Sigmoid colon (tissue), 7 donors: ENCODE measurements at regions of chr1 and their contacts with region 1.

Region 1: GRCh38 chr1:236523701-236524141 is at the start of gene LGALS8:
- DNase-seq: peak; percentile 95
- H3K4me3 ChIP-seq: peak within 1 kb of the TSS; percentile 64 to 98 (median 84)
- H3K27ac ChIP-seq: peak within 1 kb of the TSS; percentile 81 to 94 (median 89)
- H3K4me1 ChIP-seq: peaks cover 0 to 19% (median 13%) of the 10 kb centered on the region in 4 donors
- H3K27me3 ChIP-seq: no peaks in the 10 kb centered on the region
- CTCF ChIP-seq: no peak
- EP300 ChIP-seq: peak in 1 of 4 donors; percentile 36
- POLR2A ChIP-seq: peak in 1 of 2 donors; percentile 4
- total RNA-seq, gene LGALS8: 40.3 to 86.4 (median 68.1) TPM

Region 2: DNA sequence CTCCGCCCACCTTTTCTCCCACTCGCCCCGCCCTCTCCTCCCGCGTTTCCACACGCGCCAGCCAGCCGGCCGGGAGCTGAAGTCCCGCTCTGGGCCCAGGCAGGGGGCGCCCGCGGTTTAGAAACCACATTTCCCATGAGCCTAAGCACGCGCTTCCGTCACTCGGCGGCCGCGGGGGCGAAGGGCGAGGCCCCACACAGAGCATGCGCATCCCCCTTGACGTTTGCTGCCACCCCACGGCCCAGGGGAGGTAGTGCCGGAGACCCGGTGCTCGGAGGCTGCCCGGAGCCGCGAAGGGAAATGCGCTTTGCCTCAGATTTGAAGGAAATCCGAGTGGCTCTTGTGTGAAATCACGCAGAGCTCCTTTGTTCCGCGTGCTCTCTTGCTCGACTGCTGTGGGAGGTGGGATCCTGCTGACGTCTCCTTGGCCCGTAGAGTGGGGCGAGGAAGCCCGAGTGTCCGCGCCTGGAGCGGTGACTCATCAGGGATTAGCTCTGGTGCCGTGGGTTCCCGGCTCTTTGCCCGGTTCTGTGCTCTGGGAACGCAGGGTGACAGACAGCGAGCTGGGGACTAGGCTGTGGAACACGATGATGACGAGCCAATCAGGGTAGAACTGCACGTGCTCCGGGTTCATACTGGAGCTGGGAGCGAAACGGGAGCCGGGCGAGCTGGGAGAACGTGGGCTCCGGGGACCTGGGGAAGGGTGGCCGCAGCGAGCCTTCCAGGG is 1019.1 kb before region 1 on chr1:
- intact Hi-C with region 1: loop called (anchors 5 kb)
- DNase-seq: peak; percentile 100
- H3K4me3 ChIP-seq: peak overlapping the region; percentile 73 to 92 (median 84)
- H3K27ac ChIP-seq: peak overlapping the region; percentile 98 to 100 (median 100)
- H3K4me1 ChIP-seq: peaks cover 0 to 29% (median 16%) of the 10 kb centered on the region in 4 donors
- H3K27me3 ChIP-seq: no peaks in the 10 kb centered on the region
- CTCF ChIP-seq: peak; percentile 78 to 94 (median 86)
- EP300 ChIP-seq: peak in 2 of 4 donors; percentile 44 to 95
- POLR2A ChIP-seq: peak; percentile 32 to 64

Region 3: GRCh38 chr1:236103646-236104218 is 420.0 kb before region 1 on chr1:
- intact Hi-C with region 1: loop called (anchors 10 kb)
- DNase-seq: no peak
- H3K4me3 ChIP-seq: no peak overlapping the region
- H3K27ac ChIP-seq: no peak overlapping the region
- H3K4me1 ChIP-seq: peaks cover 0 to 3% (median 0%) of the 10 kb centered on the region in 4 donors
- H3K27me3 ChIP-seq: no peaks in the 10 kb centered on the region
- CTCF ChIP-seq: peak; percentile 58 to 90 (median 67)
- EP300 ChIP-seq: no peak
- POLR2A ChIP-seq: no peak

Region 4: GRCh38 chr1:236281654-236282424 is 241.9 kb before region 1 on chr1 and contains the start of gene ERO1B:
- intact Hi-C with region 1: loop called (anchors 10 kb)
- DNase-seq: peak; percentile 98
- H3K4me3 ChIP-seq: peak within 1 kb of the TSS; percentile 82 to 98 (median 94)
- H3K27ac ChIP-seq: peak within 1 kb of the TSS; percentile 87 to 92 (median 90)
- H3K4me1 ChIP-seq: peaks cover 0 to 16% (median 11%) of the 10 kb centered on the region in 4 donors
- H3K27me3 ChIP-seq: no peaks in the 10 kb centered on the region
- CTCF ChIP-seq: no peak
- EP300 ChIP-seq: peak in 1 of 4 donors; percentile 21
- POLR2A ChIP-seq: peak; percentile 80 to 91
- total RNA-seq, gene ERO1B: 9.0 to 17.2 (median 13.7) TPM

Region 5: DNA sequence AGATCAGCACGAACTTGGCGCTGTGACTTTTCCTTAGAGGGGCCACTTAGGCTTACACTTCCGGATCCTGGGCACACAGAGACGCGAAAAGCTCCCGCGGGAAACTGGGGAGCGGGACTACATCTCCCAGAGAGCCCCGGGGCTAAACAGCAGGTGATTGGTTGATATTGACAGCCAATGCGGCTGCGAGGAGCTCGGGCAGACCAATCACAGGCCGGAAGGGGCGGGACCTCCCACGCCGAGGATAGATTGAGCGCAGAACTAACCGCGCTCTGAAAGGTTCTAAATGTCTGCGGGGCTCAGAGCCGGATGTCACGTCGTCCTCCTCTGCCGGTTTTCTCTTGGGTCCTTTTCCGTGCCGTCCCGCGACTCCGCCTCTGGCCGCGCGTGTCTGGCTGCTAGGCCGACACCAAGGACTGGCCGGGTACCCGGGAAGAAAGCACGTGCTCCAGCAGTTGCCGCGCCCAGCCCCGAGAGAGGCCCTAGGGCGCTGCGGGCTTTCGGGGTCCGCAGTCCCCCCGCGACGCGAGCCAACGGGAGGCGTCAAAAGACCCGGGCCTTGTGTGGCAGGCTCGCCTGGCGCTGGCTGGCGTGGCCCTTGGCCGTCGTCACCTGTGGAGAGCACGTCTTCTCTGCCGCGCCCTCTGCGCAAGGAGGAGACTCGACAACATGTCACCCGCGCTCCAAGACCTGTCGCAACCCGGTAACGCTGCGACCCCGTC is 271.5 kb after region 1 on chr1 and contains the start of gene MTR:
- intact Hi-C with region 1: loop called (anchors 10 kb)
- DNase-seq: peak; percentile 99
- H3K4me3 ChIP-seq: peak within 1 kb of the TSS; percentile 62 to 97 (median 73)
- H3K27ac ChIP-seq: peak within 1 kb of the TSS; percentile 88 to 97 (median 92)
- H3K4me1 ChIP-seq: peaks cover 0 to 34% (median 27%) of the 10 kb centered on the region in 4 donors
- H3K27me3 ChIP-seq: no peaks in the 10 kb centered on the region
- CTCF ChIP-seq: no peak
- EP300 ChIP-seq: no peak
- POLR2A ChIP-seq: peak; percentile 71 to 83
- total RNA-seq, gene MTR: 28.2 to 38.4 (median 30.7) TPM